Activated naive CD4-positive, alpha-beta T cell treated with anti-CD3 and anti-CD28 coated beads for 36 hours (primary cell): ENCODE measurements at regions of chr2 and their contacts with region 1.

Region 1: GRCh38 chr2:10072656-10073480 is 7.3 kb downstream of the CYS1 start:
- DNase-seq: peak; percentile 88
- H3K4me3 Mint-ChIP-seq: no peak overlapping the region
- H3K27ac Mint-ChIP-seq: no peak overlapping the region
- H3K4me1 Mint-ChIP-seq: peaks cover 1% of the 10 kb centered on the region
- H3K27me3 Mint-ChIP-seq: peaks cover 45% of the 10 kb centered on the region

Region 2: DNA sequence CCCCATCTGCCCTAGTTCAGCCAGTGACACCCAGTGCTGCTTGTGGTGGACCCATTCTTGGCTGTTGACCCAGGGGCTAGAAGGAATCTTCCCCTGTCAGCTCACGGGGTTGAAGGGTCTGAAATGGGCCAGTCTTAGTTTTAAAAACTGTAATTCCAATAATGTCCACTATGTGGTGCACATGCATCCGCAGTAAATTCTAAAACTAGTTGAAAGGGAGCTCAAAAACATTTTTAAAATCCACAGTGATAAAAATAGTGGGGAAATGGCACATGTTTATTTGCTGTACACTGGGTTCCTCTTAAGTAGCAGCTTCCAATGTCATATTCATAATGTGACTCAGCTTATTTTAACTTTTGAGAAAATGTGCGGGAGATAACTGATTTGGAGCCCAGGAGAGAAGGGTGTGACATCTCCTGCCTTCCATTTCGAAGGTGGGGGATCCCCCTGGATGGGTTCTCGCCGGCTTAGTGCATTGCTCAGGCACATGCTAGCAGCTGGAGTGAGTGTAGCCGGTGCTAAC is 88.6 kb before region 1 on chr2:
- CTCF ChIA-PET with region 1: interaction called, 22 read pairs
- intact Hi-C with region 1: no loop called
- DNase-seq: peak; percentile 48
- H3K4me3 Mint-ChIP-seq: no peak overlapping the region
- H3K27ac Mint-ChIP-seq: no peak overlapping the region
- H3K4me1 Mint-ChIP-seq: peaks cover 15% of the 10 kb centered on the region
- H3K27me3 Mint-ChIP-seq: no peaks in the 10 kb centered on the region

Region 3: GRCh38 chr2:10043906-10044601 is 28.8 kb before region 1 on chr2:
- CTCF ChIA-PET with region 1: interaction called, 12 read pairs
- intact Hi-C with region 1: no loop called
- DNase-seq: peak; percentile 87
- H3K4me3 Mint-ChIP-seq: peak overlapping the region; percentile 59
- H3K27ac Mint-ChIP-seq: peak overlapping the region; percentile 33
- H3K4me1 Mint-ChIP-seq: peaks cover 15% of the 10 kb centered on the region
- H3K27me3 Mint-ChIP-seq: peaks cover 3% of the 10 kb centered on the region

Region 4: GRCh38 chr2:10097352-10098148 is 24.7 kb after region 1 on chr2:
- CTCF ChIA-PET with region 1: interaction called, 117 read pairs
- intact Hi-C with region 1: loop called (anchors 1 kb)
- DNase-seq: peak; percentile 41
- H3K4me3 Mint-ChIP-seq: no peak overlapping the region
- H3K27ac Mint-ChIP-seq: no peak overlapping the region
- H3K4me1 Mint-ChIP-seq: peaks cover 2% of the 10 kb centered on the region
- H3K27me3 Mint-ChIP-seq: peaks cover 26% of the 10 kb centered on the region

Region 5: GRCh38 chr2:10135296-10136089 is 62.6 kb after region 1 on chr2:
- CTCF ChIA-PET with region 1: interaction called, 11 read pairs
- intact Hi-C with region 1: loop called (anchors 2 kb)
- DNase-seq: no peak
- H3K4me3 Mint-ChIP-seq: no peak overlapping the region
- H3K27ac Mint-ChIP-seq: peak overlapping the region; percentile 14
- H3K4me1 Mint-ChIP-seq: peaks cover 10% of the 10 kb centered on the region
- H3K27me3 Mint-ChIP-seq: no peaks in the 10 kb centered on the region

Region 6: GRCh38 chr2:10302479-10303180 is 229.8 kb after region 1 on chr2 and contains the start of gene HPCAL1:
- CTCF ChIA-PET with region 1: interaction called, 3 read pairs
- intact Hi-C with region 1: loop called (anchors 5 kb)
- DNase-seq: peak; percentile 84
- H3K4me3 Mint-ChIP-seq: peak within 1 kb of the TSS; percentile 99
- H3K27ac Mint-ChIP-seq: peak within 1 kb of the TSS; percentile 83
- H3K4me1 Mint-ChIP-seq: peaks cover 71% of the 10 kb centered on the region
- H3K27me3 Mint-ChIP-seq: no peaks in the 10 kb centered on the region
- total RNA-seq, gene HPCAL1: 71.4 to 73.8 TPM

Region 7: DNA sequence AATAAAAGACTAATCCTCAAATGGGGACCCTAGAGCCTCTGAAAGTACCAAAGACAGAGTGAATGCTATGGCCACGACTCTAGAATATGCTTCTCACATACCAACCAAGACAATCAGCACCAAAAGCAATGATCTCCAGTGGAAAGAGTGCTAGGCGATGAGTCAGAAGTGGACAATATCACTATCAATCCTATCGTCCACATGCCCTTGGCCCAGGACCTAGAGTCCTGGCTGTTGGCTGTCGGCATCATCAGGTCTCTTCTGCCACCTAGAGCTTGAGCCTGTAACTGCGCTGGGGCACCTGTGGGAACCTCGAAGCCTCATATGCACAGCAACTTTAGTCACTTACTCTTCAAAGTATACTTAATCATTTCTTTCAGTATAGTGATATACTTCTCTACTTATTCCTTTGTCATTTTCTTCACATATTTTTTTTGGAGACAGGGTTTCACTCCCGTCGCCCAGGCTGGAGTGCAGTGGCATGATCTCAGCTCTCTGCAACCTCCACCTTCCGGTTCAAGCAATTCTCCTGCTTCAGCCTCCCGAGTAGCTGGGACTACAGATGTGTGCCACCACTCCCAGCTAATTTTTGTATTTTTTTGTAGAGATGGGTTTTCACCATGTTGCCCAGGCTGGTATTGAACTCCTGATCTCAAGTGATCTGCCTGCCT is 587.2 kb after region 1 on chr2:
- CTCF ChIA-PET with region 1: no interaction called
- intact Hi-C with region 1: loop called (anchors 2 kb)
- DNase-seq: peak; percentile 69
- H3K4me3 Mint-ChIP-seq: no peak overlapping the region
- H3K27ac Mint-ChIP-seq: no peak overlapping the region
- H3K4me1 Mint-ChIP-seq: peaks cover 19% of the 10 kb centered on the region
- H3K27me3 Mint-ChIP-seq: no peaks in the 10 kb centered on the region